Dendritic cell treated with granulocyte-macrophage colony-stimulating factor and Interleukin-4, amounts not matched to agents 40 ng/mL and 50 ng/mL, for 4 days (primary cell): ENCODE measurements at regions of chr19 and their contacts with region 1.

Region 1: DNA sequence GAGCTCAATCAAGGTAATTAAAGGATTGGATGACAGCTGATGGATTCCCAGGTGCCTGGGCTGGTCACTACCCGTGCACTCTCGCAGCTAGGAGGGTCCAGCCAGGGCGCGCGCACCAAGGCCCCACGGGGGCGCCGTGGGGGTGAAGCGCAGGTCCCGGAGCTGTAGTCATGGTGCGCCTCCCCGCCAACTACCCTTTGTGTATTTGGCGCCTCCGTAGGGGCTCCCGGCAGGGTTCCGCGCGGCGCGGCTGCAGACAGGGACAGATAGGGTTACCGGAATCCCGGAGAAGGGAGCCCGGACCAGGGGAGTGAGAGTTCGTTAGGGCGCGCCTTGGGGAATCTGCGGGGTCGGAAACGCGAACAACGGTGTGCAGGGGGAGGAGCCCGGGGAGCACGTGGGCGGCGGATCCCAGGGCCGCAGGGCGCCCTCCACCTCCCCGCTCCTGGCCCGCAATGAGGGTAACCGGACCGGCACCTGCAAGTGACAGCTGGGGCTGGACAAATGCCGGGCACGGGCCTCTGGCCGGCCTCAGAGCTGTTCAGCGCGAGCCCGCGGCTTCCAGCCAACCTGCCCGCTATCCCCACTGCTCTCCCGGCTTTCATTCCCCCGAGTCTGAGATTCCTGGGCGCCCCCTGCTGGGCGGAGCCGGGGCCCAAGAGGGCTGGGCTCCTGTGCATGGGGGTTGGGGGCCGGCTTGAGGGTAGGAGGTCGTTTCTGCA is 3.4 kb upstream of the PRAM1 start:
- H3K4me3 Mint-ChIP-seq: peak overlapping the region; percentile 90
- H3K27ac Mint-ChIP-seq: peak overlapping the region; percentile 90
- H3K4me1 Mint-ChIP-seq: peaks cover 68% of the 10 kb centered on the region
- H3K27me3 Mint-ChIP-seq: no peaks in the 10 kb centered on the region

Region 2: GRCh38 chr19:8444645-8445487 is 61.0 kb before region 1 on chr19 and contains the start of gene HNRNPM:
- intact Hi-C with region 1: loop called (anchors 2 kb)
- H3K4me3 Mint-ChIP-seq: peak within 1 kb of the TSS; percentile 94
- H3K27ac Mint-ChIP-seq: peak within 1 kb of the TSS; percentile 94
- H3K4me1 Mint-ChIP-seq: peaks cover 46% of the 10 kb centered on the region
- H3K27me3 Mint-ChIP-seq: no peaks in the 10 kb centered on the region

Region 3: GRCh38 chr19:8459520-8460259 is 46.2 kb before region 1 on chr19:
- intact Hi-C with region 1: no loop called
- H3K4me3 Mint-ChIP-seq: no peak overlapping the region
- H3K27ac Mint-ChIP-seq: no peak overlapping the region
- H3K4me1 Mint-ChIP-seq: peaks cover 41% of the 10 kb centered on the region
- H3K27me3 Mint-ChIP-seq: no peaks in the 10 kb centered on the region

Region 4: DNA sequence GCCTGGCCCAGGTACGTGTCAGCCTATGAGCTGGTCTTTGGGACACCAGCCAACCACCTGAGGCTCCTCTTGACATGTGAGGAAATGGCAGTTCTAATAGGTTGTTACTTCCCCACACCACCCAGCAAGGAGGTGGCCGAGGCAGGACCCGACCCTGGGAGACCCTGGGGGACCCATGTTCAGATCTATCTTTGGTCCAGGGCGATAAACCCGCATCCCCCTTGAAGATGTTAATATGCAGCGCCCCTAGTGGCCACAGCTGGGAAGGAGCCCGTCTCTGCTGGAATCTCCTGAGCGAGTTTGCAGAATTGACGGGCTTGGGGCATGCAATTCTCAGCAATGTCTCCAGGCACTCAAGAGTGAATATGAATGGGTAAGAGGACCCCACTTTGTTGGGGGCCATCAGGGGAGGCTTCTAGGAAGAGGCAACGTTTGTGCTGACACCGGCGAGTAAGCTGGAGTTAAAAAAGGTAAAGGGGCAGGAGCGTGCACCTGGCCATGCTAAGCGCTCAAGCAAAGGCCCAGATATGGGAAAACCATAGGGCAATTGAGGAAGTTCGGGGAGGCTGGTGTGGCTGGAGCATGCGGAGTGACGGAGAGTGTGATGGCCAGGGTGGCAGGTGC is 72.9 kb after region 1 on chr19:
- intact Hi-C with region 1: no loop called
- H3K4me3 Mint-ChIP-seq: no peak overlapping the region
- H3K27ac Mint-ChIP-seq: peak overlapping the region; percentile 14
- H3K4me1 Mint-ChIP-seq: peaks cover 56% of the 10 kb centered on the region
- H3K27me3 Mint-ChIP-seq: no peaks in the 10 kb centered on the region

Region 5: GRCh38 chr19:8673276-8673891 is 167.5 kb after region 1 on chr19:
- intact Hi-C with region 1: no loop called
- H3K4me3 Mint-ChIP-seq: no peak overlapping the region
- H3K27ac Mint-ChIP-seq: no peak overlapping the region
- H3K4me1 Mint-ChIP-seq: peaks cover 14% of the 10 kb centered on the region
- H3K27me3 Mint-ChIP-seq: peaks cover 5% of the 10 kb centered on the region